ENCODE measurements at regions of chr7 and their contacts with region 1.

Region 1: DNA sequence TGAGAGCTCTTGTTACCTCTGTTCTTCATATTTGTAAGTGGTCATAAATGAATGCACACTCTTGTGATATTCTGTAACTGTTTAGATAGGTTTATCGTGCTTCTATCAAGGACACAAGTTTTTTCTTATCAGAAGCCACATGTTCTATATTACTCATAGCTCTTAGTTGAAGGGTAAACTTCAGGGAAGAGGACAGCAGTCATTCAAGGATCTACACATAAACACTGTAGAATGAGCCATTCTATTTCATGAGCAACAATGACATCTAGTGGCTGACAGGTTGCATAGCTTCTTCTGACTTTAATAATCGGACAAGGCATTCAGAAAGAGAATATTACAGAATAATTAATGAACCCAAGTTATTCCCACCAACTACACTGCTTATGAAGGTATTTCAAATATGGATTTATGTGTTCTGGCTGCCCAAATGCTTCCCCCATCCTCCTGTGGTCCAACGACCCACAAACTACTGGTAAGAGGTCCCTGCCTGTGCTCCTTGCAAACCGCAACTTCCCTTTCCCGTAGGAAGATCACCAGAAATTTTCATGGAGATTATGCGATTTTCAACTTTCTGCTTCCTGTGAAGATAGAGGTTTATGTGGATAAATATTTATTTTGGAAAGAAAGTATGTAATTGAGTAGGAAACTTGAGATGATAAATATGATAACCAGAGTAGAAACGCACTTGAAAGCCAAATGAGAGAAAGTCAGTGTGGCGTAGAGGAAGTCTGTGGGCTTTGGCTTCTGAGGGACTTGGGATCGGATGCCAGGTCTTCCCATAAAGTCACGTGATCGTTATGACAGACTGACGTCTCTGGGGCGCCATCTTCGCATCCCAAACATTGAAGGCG is 16.8 kb upstream of the ABCB5 start:
- DNase-seq: peak; percentile 59
- H3K4me3 ChIP-seq: no peak overlapping the region; a peak in 1 of 4 replicates
- H3K27ac ChIP-seq: no peak overlapping the region
- H3K4me1 ChIP-seq: peaks cover 0 to 2% of the 10 kb centered on the region in 2 experiments; a peak in 2 of 4 replicates
- H3K27me3 ChIP-seq: no peaks in the 10 kb centered on the region
- CTCF ChIP-seq: peak; percentile 97
- EP300 ChIP-seq: no peak; a peak in 1 of 4 replicates
- RAD21 ChIP-seq: peak; percentile 100

Region 2: DNA sequence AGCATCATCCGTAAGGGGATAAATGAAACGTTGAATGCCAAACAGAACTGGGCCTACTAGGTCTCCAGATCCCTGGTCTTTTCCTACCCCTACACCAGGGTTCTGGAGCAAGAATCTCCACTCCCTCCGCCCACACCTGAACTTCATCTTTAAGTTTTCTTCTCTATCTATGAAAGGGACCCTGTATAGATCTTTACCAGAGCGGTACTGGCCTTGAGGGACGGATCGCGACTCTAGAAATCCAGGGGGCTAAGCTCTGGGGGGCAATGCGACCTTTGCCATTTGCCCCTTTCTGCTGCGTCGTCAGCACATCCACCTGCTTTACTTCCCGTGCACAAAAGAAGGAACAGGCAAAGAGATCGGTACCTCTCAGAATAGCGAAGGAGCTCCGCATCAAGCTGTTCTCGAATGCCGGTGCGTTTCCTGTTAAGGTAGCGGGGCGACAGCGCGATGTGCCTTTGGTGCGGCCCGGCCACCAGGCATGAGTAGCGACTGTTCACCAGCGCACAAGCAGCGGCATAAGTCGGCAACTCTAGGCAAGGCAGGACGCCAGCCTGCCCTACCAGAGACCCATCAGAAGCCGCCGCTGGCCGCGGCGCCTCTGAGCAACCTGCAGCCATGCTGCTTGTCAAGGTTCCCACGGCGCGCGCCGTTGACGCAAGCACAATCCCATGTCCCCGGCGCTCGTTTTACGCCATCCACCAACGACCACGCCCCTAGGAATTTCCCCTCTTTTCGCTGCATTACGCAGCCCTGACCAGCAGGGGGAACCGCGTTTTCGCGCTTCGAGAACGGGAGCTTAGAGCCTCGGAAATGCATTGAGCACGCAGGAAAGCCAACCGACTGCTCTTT is 890.1 kb before region 1 on chr7 and contains the start of gene POLR1F:
- CTCF ChIA-PET with region 1: interaction called, 153 read pairs
- POLR2A ChIA-PET with region 1: interaction called, 3 read pairs
- DNase-seq: peak; percentile 93
- H3K4me3 ChIP-seq: peak within 1 kb of the TSS; percentile 82 to 100
- H3K27ac ChIP-seq: peak within 1 kb of the TSS; percentile 38 to 47; a peak in 3 of 4 replicates
- H3K4me1 ChIP-seq: peaks cover 0 to 16% of the 10 kb centered on the region in 2 experiments; a peak in 2 of 4 replicates
- H3K27me3 ChIP-seq: no peaks in the 10 kb centered on the region
- CTCF ChIP-seq: peak; percentile 97
- EP300 ChIP-seq: no peak
- RAD21 ChIP-seq: peak; percentile 69
- polyA plus RNA-seq, gene POLR1F: 5.1 and 8.1 TPM in 2 replicates

Region 3: DNA sequence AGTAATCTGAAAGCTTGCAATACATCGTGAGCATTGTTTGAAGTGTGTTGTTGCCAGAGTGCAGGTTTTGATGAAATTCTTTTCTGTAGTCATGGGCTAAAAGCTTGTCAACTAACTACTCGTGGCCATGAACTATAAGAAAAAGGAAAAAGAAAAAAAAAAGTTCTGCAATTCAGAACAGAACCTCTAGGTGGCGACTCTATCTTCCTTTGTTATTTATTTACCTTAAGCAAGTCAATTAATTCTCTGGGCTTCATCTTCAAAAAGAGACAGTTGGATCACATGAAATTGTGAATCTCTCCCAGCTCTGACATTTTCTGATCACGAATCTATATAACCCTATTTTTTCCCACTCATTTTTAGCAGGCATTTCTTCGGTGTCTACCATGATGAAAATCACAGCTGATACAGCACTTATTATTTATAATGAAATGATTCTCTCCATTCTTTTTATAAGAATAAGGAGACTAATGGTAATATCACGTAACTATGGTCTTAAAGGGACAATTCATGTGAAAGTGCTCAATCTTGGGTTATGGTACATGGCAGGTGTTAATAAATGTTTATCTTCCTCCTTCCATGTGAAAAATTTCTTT is 844.1 kb before region 1 on chr7:
- CTCF ChIA-PET with region 1: interaction called, 53 read pairs
- POLR2A ChIA-PET with region 1: no interaction called
- DNase-seq: peak; percentile 12
- H3K4me3 ChIP-seq: no peak overlapping the region; a peak in 1 of 4 replicates
- H3K27ac ChIP-seq: no peak overlapping the region
- H3K4me1 ChIP-seq: no peaks in the 10 kb centered on the region
- H3K27me3 ChIP-seq: peaks cover 5% of the 10 kb centered on the region; the same call in 1 of the 2 replicates
- CTCF ChIP-seq: peak; percentile 95
- EP300 ChIP-seq: no peak
- RAD21 ChIP-seq: peak; percentile 71

Region 4: DNA sequence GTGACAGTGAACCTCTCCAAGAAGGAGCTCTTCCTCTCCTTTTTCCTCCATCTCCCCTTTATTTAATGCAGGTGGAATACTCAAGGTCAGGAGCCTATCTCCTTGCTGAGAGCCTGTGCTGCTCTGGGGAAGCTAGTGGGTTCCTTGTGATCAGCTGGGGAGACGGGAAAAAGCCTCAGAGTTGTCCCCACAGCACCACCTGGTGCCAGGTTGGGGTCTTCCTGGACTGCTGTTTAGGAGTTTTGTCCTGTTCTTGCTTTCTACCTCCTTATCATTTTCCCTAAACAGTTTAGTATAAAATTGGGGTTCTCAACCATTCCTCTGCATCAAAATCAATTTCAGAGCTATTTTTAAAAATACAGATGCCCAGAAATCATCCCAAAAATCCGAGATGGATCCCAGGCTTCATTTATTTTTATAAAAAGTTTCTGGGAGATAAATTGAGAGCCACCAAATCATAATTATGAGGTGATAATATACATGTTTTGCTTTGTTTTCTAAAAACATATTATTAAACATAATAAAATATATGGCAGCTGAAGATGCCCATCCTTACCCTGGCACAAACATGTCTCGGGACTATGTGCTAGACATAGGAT is 425.8 kb before region 1 on chr7:
- CTCF ChIA-PET with region 1: interaction called, 34 read pairs
- POLR2A ChIA-PET with region 1: no interaction called
- DNase-seq: peak; percentile 66
- H3K4me3 ChIP-seq: no peak overlapping the region
- H3K27ac ChIP-seq: no peak overlapping the region
- H3K4me1 ChIP-seq: no peaks in the 10 kb centered on the region
- H3K27me3 ChIP-seq: no peaks in the 10 kb centered on the region
- CTCF ChIP-seq: peak; percentile 67
- EP300 ChIP-seq: no peak
- RAD21 ChIP-seq: peak; percentile 78

Region 5: GRCh38 chr7:20365486-20365885 is 233.2 kb before region 1 on chr7:
- CTCF ChIA-PET with region 1: no interaction called
- POLR2A ChIA-PET with region 1: no interaction called
- DNase-seq: peak; percentile 27
- H3K4me3 ChIP-seq: no peak overlapping the region
- H3K27ac ChIP-seq: no peak overlapping the region; a peak in 1 of 4 replicates
- H3K4me1 ChIP-seq: peaks cover 0 to 4% of the 10 kb centered on the region in 2 experiments; a peak in 2 of 4 replicates
- H3K27me3 ChIP-seq: no peaks in the 10 kb centered on the region
- CTCF ChIP-seq: no peak
- EP300 ChIP-seq: no peak
- RAD21 ChIP-seq: no peak

Region 6: DNA sequence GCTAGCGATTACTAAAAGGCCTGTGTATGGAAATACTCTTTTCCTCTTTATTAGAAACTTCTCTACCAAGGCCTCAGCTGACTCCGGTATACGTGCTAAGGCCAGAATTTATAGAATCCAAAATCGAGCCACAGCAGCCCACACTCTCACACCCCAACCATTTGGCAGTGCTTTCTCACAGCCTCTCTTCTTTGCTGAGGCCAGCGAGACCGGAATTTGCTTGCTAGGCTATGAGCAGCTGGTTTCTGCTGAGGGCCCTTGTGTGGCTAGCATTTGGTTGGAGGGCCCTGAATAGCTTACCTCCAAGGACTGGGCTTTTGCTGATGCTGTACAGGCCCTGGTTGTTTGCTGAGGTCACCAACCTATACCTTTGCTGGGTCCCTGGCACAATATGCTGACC is 221.9 kb before region 1 on chr7:
- CTCF ChIA-PET with region 1: no interaction called
- POLR2A ChIA-PET with region 1: no interaction called
- DNase-seq: no peak
- H3K4me3 ChIP-seq: no peak overlapping the region
- H3K27ac ChIP-seq: no peak overlapping the region
- H3K4me1 ChIP-seq: no peaks in the 10 kb centered on the region
- H3K27me3 ChIP-seq: no peaks in the 10 kb centered on the region
- CTCF ChIP-seq: no peak
- EP300 ChIP-seq: no peak
- RAD21 ChIP-seq: no peak

Region 7: DNA sequence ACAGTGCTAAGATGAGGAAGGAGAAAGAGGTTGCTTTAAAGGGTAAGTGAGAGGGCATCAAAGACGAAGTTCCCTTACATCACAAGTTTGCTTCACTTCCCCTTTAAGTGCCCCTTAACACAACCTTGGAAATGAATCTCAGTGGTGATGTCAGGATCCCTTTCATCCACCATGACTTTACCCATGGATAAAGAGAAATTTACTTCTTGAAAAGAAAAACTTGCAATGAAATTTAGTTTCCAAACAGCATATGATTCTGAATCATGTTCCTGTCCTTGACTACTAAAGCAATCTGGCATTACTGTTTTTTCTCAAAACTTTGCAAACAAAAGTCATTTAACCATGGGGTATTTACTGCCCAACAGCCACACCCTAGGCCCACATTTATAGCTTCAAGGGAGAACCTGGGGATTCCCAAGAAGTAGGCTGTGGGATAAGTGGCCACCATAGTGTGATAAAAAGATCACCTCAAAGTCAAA is 132.1 kb before region 1 on chr7:
- CTCF ChIA-PET with region 1: interaction called, 10 read pairs
- POLR2A ChIA-PET with region 1: no interaction called
- DNase-seq: no peak
- H3K4me3 ChIP-seq: no peak overlapping the region
- H3K27ac ChIP-seq: no peak overlapping the region
- H3K4me1 ChIP-seq: no peaks in the 10 kb centered on the region
- H3K27me3 ChIP-seq: 0 out of 2 replicates have a peak, but pooled peaks cover 5% of the 10 kb centered on the region
- CTCF ChIP-seq: no peak
- EP300 ChIP-seq: no peak
- RAD21 ChIP-seq: no peak

Region 8: DNA sequence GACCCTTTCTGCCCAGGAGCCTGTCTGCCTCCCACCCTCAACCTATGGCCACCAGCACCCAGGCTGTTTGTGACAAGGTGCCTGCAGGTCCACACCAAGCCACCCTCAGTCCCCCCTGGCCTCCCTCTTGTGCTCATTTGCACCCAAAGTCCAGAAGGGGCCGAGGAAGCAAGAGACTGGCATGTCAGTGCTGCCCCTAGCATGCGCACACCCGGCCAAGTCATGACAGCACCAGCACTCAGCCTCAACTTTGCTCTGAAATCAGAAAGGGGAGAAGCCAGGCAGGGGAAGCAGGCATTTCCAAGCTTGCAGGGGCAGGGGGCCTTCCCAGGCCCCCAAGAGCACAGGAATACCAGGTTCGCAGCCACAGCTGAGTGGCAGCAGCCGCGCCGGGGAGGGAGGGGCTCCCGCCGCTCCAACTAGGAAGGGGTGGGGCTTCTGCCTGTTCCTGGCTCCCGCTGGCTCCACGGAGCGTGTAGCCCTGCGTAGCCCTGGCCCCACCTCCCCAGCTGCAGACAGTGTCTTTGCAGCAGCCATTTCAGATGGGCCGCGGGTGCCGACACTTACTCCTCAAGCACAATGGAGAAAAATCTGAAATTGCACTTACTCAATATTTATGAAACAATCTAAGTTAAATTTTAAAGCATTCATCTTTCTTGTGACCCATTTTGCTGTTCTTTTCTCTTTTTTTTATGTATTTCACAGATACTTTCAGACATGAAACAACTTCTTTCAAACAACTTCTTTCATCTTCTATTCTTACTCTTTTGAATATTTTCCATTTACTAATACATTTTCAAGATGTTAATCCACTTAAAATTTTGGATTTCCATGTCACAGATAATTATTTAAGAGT is 38.1 kb before region 1 on chr7:
- CTCF ChIA-PET with region 1: interaction called, 10 read pairs
- POLR2A ChIA-PET with region 1: no interaction called
- DNase-seq: no peak
- H3K4me3 ChIP-seq: no peak overlapping the region
- H3K27ac ChIP-seq: no peak overlapping the region
- H3K4me1 ChIP-seq: peaks cover 0 to 14% of the 10 kb centered on the region in 2 experiments; a peak in 2 of 4 replicates
- H3K27me3 ChIP-seq: no peaks in the 10 kb centered on the region
- CTCF ChIP-seq: no peak
- EP300 ChIP-seq: no peak
- RAD21 ChIP-seq: no peak

Region 9: DNA sequence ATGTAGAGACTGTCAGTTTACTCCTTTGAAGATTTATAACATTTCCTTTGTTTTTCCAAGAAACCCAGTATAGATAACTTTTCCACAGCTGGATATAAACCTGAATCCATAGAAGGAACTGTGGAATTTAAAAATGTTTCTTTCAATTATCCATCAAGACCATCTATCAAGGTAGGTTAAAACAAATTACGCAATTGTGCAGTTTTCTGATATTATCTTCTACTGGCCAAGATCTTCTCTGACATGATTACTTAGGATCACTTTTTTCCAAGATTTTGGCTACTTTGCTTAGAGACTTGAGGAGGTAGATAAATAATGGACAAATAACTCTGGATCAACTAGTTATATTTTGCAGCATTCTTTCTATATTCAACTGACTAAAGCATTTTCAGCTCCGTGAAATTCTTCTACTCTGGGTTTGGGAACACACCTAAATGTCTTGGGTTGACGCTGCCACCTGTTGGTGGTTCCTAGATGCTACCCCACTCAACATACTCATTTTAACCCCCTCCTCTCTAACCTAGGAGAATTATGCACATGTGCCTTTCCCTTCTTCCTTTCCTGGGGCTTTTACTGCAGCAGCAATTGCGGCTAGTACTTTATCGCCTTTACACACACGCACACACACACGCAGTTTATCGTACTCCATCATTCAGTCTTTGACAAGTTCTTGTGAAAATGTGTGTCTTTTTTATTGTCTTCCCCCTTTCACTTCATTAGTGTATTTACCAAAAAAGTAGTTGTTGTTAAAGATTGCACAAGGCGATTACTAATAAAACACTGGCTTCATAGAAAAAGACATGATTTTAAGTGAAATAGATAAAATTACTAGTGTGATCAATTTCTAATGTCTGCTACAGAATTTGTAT is 49.5 kb after region 1 on chr7:
- CTCF ChIA-PET with region 1: interaction called, 24 read pairs
- POLR2A ChIA-PET with region 1: no interaction called
- DNase-seq: peak; percentile 51
- H3K4me3 ChIP-seq: no peak overlapping the region
- H3K27ac ChIP-seq: no peak overlapping the region
- H3K4me1 ChIP-seq: no peaks in the 10 kb centered on the region
- H3K27me3 ChIP-seq: no peaks in the 10 kb centered on the region; the same call in 1 of the 2 replicates
- CTCF ChIP-seq: peak; percentile 44; the same call in 1 of the 2 replicates
- EP300 ChIP-seq: no peak
- RAD21 ChIP-seq: peak; percentile 66